CD4-positive, alpha-beta T cell (primary cell): ENCODE measurements at regions of chr1 and their contacts with region 1.

Region 1: DNA sequence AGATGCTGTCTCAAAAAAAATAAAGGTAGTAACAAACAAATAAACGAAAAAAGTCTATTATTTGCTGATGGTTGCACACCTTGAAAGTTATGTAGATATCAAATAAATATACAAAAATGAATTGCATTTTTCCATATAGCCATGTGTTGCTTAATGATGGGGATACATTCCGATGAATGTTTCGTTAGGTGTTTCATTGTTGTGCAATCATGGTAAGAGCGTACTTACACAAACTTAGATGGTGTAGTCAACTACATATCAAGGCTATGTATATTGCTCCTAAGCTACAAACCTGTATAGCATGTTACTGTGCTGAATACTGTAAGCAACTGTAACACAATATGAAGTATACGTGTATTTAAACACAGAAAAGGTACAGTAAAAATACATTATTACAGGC is 34.4 kb downstream of the AHCTF1 start:
- DNase-seq: no peak
- ATAC-seq: no peak
- H3K4me3 ChIP-seq: no peak overlapping the region
- H3K4me3 Mint-ChIP-seq: no peak overlapping the region
- H3K27ac ChIP-seq: no peak overlapping the region
- H3K27ac Mint-ChIP-seq: no peak overlapping the region
- H3K4me1 ChIP-seq: no peaks in the 10 kb centered on the region
- H3K4me1 Mint-ChIP-seq: peaks cover 4% of the 10 kb centered on the region
- H3K27me3 ChIP-seq: no peaks in the 10 kb centered on the region
- H3K27me3 Mint-ChIP-seq: no peaks in the 10 kb centered on the region
- CTCF ChIP-seq: no peak

Region 2: GRCh38 chr1:246753670-246754535 is 143.4 kb before region 1 on chr1:
- CTCF ChIA-PET with region 1: no interaction called
- POLR2A ChIA-PET with region 1: no interaction called
- intact Hi-C with region 1: no loop called
- DNase-seq: peak; percentile 26 to 74 (median 40)
- ATAC-seq: peak; percentile 71
- H3K4me3 ChIP-seq: no peak overlapping the region
- H3K4me3 Mint-ChIP-seq: no peak overlapping the region
- H3K27ac ChIP-seq: no peak overlapping the region
- H3K27ac Mint-ChIP-seq: no peak overlapping the region
- H3K4me1 ChIP-seq: no peaks in the 10 kb centered on the region
- H3K4me1 Mint-ChIP-seq: no peaks in the 10 kb centered on the region
- H3K27me3 ChIP-seq: no peaks in the 10 kb centered on the region
- H3K27me3 Mint-ChIP-seq: no peaks in the 10 kb centered on the region
- CTCF ChIP-seq: peak; percentile 64

Region 3: DNA sequence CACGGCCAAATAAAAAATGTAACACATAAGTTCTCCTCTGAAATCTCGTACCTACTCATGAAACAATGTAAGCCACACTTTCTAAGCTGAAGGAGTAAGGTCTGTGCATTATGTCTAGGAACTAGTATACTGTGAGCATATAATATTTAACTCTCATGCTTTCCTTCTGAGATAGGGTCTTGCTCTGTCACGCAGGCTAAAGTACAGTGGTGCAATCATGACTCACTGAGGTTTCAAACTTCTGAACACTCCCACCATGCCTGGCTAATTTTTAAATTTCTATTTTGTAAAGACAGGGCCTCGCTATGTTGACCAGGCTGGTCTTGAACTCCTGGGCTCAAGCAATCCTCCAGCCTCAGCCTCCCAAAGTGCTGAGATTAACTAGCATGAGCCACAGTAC is 36.9 kb before region 1 on chr1:
- CTCF ChIA-PET with region 1: no interaction called
- POLR2A ChIA-PET with region 1: no interaction called
- intact Hi-C with region 1: loop called in 1 of 2 experiments (anchors 5 kb)
- DNase-seq: no peak
- ATAC-seq: no peak
- H3K4me3 ChIP-seq: no peak overlapping the region
- H3K4me3 Mint-ChIP-seq: no peak overlapping the region
- H3K27ac ChIP-seq: no peak overlapping the region
- H3K27ac Mint-ChIP-seq: no peak overlapping the region
- H3K4me1 ChIP-seq: no peaks in the 10 kb centered on the region
- H3K4me1 Mint-ChIP-seq: no peaks in the 10 kb centered on the region
- H3K27me3 ChIP-seq: no peaks in the 10 kb centered on the region
- H3K27me3 Mint-ChIP-seq: no peaks in the 10 kb centered on the region
- CTCF ChIP-seq: no peak

Region 4: DNA sequence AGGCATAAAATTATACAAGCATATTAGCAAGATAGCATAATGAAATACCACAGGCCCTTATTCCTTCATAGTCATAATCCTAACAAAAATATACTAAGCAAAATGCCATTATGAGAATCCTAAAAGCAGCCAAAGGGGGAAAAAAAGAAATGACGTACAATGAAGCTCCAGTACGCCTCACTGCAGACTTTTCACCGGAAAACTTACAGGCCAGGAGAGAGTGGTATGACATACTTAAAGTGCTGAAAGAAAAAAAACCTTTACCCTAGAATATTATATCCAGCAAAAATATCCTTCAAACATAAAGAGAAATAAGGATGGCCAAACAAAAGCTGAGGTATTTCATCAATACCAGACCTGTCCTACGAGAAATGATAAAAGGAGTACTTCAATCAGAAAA is 91.0 kb after region 1 on chr1:
- CTCF ChIA-PET with region 1: no interaction called
- POLR2A ChIA-PET with region 1: no interaction called
- intact Hi-C with region 1: no loop called
- DNase-seq: no peak
- ATAC-seq: no peak
- H3K4me3 ChIP-seq: no peak overlapping the region
- H3K4me3 Mint-ChIP-seq: no peak overlapping the region
- H3K27ac ChIP-seq: no peak overlapping the region
- H3K27ac Mint-ChIP-seq: no peak overlapping the region
- H3K4me1 ChIP-seq: no peaks in the 10 kb centered on the region
- H3K4me1 Mint-ChIP-seq: no peaks in the 10 kb centered on the region
- H3K27me3 ChIP-seq: no peaks in the 10 kb centered on the region
- H3K27me3 Mint-ChIP-seq: no peaks in the 10 kb centered on the region
- CTCF ChIP-seq: no peak